Gastrocnemius medialis (tissue), 4 donors: ENCODE measurements at regions of chr11 and their contacts with region 1.

Region 1: GRCh38 chr11:17384002-17384511 is 4.4 kb downstream of the KCNJ11 start:
- DNase-seq: peak; percentile 71 to 88
- ATAC-seq: peak; percentile 35 to 45
- H3K4me3 ChIP-seq: peak overlapping the region in 3 of 4 donors; percentile 55 to 72 (median 68)
- H3K27ac ChIP-seq: peak overlapping the region; percentile 90 to 98 (median 97)
- H3K4me1 ChIP-seq: peaks cover 45% of the 10 kb centered on the region in 2 donors
- H3K27me3 ChIP-seq: no peaks in the 10 kb centered on the region
- CTCF ChIP-seq: peak; percentile 92 to 97 (median 94)
- POLR2A ChIP-seq: no peak

Region 2: DNA sequence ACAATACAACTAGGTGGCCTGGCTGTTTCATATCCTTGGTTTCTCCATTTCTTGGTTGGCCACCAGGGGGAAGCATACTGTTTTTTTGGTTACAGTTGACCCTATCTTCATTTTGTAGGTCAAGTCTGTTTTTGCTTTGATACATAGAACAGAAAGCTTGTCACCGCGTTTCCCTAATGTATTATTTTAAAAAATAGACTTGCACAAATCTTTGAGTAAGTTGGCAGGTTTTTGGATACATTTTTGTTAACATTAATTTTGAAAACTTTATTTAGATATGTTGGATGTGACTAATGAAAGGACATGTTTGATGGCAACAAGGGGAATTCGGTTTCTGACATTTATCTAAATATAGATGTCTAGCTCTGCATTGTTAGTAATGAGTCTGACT is 29.5 kb before region 1 on chr11:
- in situ Hi-C with region 1: no loop called
- intact Hi-C with region 1: loop called (anchors 1 kb)
- DNase-seq: peak; percentile 32 to 54
- ATAC-seq: peak; percentile 62 to 66
- H3K4me3 ChIP-seq: no peak overlapping the region
- H3K27ac ChIP-seq: no peak overlapping the region
- H3K4me1 ChIP-seq: peaks cover 17 to 24% of the 10 kb centered on the region in 2 donors
- H3K27me3 ChIP-seq: peaks cover 16 to 27% (median 25%) of the 10 kb centered on the region in 3 donors
- CTCF ChIP-seq: peak; percentile 41 to 72 (median 56)
- POLR2A ChIP-seq: no peak

Region 3: GRCh38 chr11:17471501-17471900 is 87.4 kb after region 1 on chr11:
- in situ Hi-C with region 1: loop called in 1 of 4 experiments (anchors 10 kb)
- intact Hi-C with region 1: loop called (anchors 1 kb)
- DNase-seq: peak; percentile 56 to 65
- ATAC-seq: peak; percentile 89 to 93
- H3K4me3 ChIP-seq: no peak overlapping the region
- H3K27ac ChIP-seq: no peak overlapping the region
- H3K4me1 ChIP-seq: peaks cover 0 to 9% of the 10 kb centered on the region in 2 donors
- H3K27me3 ChIP-seq: peaks cover 0 to 9% (median 0%) of the 10 kb centered on the region in 3 donors
- CTCF ChIP-seq: peak in 4 of 5 experiments; percentile 42 to 57 (median 48)
- POLR2A ChIP-seq: no peak

Region 4: DNA sequence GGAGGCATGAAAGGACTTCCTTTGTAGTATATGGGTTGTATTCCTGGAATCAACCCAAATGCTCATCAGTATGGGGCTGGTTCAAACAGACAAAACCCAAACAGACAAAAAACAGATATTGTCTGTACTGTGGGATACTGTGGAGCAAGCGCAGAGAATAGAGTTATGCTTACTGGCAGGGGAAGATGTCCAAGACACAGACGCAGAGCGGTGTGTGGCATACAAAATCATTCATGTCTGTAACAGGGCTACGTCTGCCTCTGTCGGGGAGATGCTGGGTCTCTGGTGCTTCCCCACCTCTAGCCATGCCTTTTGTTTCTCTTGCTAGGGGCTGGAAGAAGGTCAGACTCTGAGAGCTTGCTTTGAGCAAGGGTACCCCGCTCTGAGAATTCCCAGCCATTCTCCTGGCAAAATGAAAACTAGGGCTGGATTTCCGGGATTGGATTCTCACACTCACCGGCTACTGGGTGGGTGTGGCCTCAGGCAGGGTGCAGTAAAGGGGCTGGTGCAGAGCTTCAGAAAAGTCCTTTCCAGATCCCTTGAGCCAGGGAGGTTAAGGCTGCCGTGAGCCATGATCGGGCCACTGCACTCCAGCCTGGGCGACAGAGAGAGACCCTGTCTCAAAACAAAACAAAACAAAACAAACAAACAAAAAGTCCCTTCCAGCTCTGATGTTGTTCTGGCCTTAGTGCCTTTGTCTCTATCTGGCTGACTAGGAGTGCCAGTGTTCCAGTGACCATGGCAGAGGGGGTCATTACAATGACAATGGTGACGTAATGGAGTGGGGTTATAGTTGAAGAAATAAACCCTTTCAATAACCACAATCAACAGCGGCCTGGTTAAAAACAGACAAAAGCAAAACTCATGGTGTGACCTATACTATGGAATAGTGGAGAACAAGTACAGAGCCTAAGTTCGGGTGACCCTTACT is 95.5 kb after region 1 on chr11:
- in situ Hi-C with region 1: loop called in 1 of 4 experiments (anchors 10 kb)
- intact Hi-C with region 1: no loop called
- DNase-seq: no peak
- ATAC-seq: peak in 1 of 2 donors; percentile 78
- H3K4me3 ChIP-seq: peak overlapping the region in 1 of 4 donors; percentile 29
- H3K27ac ChIP-seq: no peak overlapping the region
- H3K4me1 ChIP-seq: peaks cover 0 to 9% of the 10 kb centered on the region in 2 donors
- H3K27me3 ChIP-seq: peaks cover 0 to 9% (median 0%) of the 10 kb centered on the region in 3 donors
- CTCF ChIP-seq: no peak
- POLR2A ChIP-seq: no peak

Region 5: GRCh38 chr11:17504330-17505107 is 120.5 kb after region 1 on chr11:
- in situ Hi-C with region 1: loop called (anchors 5 kb)
- intact Hi-C with region 1: loop called (anchors 1 kb)
- DNase-seq: peak; percentile 59 to 82
- ATAC-seq: peak; percentile 67 to 90
- H3K4me3 ChIP-seq: no peak overlapping the region
- H3K27ac ChIP-seq: peak overlapping the region; percentile 12 to 39 (median 32)
- H3K4me1 ChIP-seq: peaks cover 20 to 24% of the 10 kb centered on the region in 2 donors
- H3K27me3 ChIP-seq: no peaks in the 10 kb centered on the region
- CTCF ChIP-seq: peak; percentile 88 to 98 (median 90)
- POLR2A ChIP-seq: no peak

Region 6: DNA sequence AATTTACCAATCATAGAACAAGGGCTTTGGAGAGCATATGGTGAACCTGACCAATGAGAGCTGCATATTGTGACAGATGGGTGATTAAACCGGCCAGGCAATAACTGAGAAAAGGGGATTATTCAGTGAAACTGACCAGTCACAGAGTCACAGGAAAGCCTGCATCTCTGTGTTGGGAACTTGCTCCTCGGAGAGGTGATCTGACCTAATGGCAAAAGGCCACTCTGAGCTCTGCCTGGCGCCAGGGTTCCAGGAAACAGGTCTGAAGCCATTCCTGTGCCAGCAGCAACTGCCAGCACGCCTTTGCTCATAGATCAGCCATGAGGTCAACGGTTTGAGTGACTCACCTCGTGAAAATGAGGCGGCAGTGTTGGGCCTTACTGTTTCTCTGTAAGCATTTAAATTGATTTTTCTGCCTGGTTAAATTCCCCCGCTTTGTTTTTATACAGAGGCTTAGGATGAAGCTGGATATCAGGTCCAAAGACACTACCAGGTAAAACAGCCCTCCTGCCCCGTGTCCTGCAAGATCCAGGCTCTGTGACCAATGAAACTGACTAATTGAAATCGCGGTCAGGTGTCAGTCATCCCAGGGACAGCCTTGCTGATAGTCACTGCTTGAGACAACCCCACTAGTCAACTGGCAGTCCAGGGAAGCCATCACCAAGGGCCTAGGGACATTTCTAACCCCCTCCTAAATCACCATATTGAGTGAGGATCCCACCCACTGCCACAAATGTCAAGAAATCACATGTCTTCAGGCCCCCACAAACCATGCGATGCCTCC is 299.5 kb after region 1 on chr11:
- in situ Hi-C with region 1: loop called in 1 of 4 experiments (anchors 25 kb)
- intact Hi-C with region 1: loop called (anchors 10 kb)
- DNase-seq: peak; percentile 58 to 87
- ATAC-seq: peak; percentile 69 to 71
- H3K4me3 ChIP-seq: no peak overlapping the region
- H3K27ac ChIP-seq: peak overlapping the region; percentile 80 to 87 (median 82)
- H3K4me1 ChIP-seq: peaks cover 56 to 61% of the 10 kb centered on the region in 2 donors
- H3K27me3 ChIP-seq: no peaks in the 10 kb centered on the region
- CTCF ChIP-seq: no peak
- POLR2A ChIP-seq: peak in 1 of 2 donors; percentile 26